Activated CD8-positive, alpha-beta T cell treated with anti-CD3 and anti-CD28 coated beads for 36 hours (primary cell): ENCODE measurements at regions of chr4 and their contacts with region 1.

Region 1: DNA sequence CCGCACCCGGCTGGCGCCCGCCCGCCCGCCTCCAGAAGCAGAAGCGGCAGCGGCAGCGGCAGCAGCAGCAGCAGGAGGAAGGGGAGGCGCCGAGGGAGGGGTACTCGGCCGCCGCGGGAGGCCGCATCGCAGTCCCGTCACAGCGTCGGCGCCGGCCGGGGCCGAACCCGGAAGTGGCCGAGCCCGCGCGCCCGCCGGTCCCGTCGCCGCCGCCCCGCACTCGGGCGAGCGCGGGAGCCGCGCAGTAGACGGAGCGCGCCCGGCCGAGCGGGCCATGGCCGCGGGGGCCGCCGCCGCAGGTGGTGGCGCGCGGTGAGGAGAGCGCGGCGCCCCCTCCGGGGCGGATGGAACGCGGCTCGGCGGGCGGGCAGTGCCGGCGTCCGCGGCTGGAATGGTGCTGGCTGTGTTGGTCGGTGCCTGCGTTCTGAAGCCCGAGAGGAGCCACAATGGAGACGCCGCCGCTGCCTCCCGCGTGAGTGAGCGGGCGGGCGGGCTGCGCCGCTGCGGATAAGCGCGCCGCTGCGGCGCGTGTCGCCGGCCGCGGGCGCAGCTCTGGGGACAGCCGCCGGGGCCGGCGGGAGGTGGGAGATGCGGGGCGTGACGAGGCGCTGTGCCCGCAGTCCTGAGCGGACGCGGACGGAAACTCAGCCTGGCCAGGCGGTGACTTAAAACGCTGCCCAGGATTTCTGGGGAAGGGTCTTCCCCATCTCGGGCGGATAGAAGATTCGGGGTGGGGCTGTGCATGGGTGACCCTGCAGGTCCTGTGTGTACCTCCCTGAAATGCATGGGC is at the start of gene KLHL2:
- DNase-seq: peak; percentile 68
- ATAC-seq: peak; percentile 58
- H3K4me3 Mint-ChIP-seq: peak within 1 kb of the TSS; percentile 85
- H3K27ac Mint-ChIP-seq: peak within 1 kb of the TSS; percentile 86
- H3K4me1 Mint-ChIP-seq: peaks cover 68% of the 10 kb centered on the region
- H3K27me3 Mint-ChIP-seq: no peaks in the 10 kb centered on the region
- CTCF ChIP-seq: no peak
- total RNA-seq, gene KLHL2: 24.5 to 29.4 TPM

Region 2: DNA sequence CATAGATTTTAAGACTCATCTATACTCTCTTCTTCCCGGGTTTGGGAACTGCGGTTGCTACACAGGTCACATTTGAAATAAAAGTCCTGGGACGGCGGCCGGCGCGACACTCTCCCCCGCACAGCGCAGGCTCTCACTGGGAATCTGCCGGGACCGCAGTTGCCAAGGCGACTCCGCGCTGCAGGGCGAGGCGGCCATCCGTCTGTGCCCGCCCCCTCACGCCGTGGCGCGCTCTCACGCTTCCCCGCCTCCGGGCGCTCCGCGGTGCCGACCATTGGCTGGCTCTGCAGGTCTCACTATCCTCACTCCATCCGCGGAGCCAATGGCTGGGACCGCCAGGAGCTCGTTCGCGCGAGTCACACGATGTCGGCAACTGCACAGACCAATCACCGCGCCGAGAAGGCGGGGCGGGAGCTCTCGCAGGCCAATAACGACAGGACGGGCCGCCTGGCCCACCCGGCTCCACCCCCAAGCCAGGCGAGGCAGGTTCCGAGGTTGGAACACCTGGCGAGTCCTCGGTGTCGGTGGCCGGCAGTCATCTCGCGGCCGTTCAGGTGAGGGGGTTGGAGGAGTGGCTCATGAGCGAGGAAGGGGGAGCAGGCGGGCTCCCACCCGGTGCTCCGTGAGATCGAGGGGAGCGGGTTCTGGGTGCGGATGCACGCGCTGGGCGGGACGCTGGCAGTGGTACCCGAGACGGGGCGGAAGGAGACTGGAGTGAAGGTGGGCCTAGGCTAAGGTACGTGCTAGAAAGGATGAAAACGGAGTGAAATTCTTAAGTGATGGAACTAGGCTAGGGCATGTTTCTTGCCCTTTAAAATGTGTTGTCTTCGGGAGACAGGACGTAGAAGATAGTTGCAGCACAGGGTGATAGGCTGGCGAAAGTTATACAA is 119.8 kb after region 1 on chr4 and contains the start of gene MSMO1:
- CTCF ChIA-PET with region 1: interaction called, 3 read pairs
- POLR2A ChIA-PET with region 1: interaction called, 4 read pairs
- intact Hi-C with region 1: loop called (anchors 5 kb)
- DNase-seq: peak; percentile 99
- ATAC-seq: peak; percentile 98
- H3K4me3 Mint-ChIP-seq: no peak within 1 kb of the TSS
- H3K27ac Mint-ChIP-seq: peak within 1 kb of the TSS; percentile 13
- H3K4me1 Mint-ChIP-seq: peaks cover 40% of the 10 kb centered on the region
- H3K27me3 Mint-ChIP-seq: no peaks in the 10 kb centered on the region
- CTCF ChIP-seq: no peak
- total RNA-seq, gene MSMO1: 42.3 to 43.2 TPM